AG04449 (cell line): ENCODE measurements at regions of chr7 and their contacts with region 1.

Region 1: DNA sequence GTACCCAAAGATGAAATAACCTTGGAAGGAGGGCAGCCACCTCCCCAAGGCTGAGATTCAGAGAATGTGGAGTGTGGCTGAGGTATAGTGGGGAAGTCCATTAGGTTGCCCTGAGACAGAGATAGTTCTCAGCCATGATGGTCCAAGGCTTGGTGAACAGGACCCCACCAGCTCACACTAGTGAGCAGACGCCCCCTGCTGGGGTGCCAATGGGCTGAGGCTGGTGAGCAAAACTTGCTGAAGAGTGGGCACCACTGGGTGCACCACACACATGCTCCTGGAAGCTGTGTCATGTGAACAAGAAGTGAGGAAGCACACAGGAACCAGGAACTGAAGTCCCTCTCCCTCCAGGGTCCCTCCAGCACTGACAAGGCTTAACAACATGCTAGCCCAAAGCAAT is 8.9 kb downstream of the FBXL13 start:
- DNase-seq: no peak
- H3K4me3 ChIP-seq: no peak overlapping the region
- CTCF ChIP-seq: peak; percentile 70

Region 2: DNA sequence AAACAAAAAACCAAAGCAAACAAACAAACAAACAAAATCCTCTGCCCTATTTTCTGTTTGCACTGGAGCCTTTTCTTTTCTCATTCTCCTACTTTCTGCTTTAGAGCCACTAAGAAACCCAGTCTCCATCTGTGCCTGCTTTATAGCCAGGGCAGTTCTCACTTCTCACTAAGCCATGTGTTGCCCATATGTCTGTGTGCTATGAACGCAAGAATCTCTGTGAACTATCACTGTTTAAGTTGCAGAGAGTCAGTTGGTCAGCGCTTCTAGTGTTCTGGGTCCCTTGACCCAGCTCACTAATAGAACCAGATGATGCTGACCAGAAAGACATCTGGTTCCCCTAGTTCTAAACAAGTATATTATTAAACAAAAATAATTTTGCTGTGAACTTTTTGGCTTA is 235.5 kb before region 1 on chr7:
- CTCF ChIA-PET with region 1: interaction called, 11 read pairs
- POLR2A ChIA-PET with region 1: no interaction called
- DNase-seq: no peak
- H3K4me3 ChIP-seq: no peak overlapping the region
- CTCF ChIP-seq: no peak

Region 3: DNA sequence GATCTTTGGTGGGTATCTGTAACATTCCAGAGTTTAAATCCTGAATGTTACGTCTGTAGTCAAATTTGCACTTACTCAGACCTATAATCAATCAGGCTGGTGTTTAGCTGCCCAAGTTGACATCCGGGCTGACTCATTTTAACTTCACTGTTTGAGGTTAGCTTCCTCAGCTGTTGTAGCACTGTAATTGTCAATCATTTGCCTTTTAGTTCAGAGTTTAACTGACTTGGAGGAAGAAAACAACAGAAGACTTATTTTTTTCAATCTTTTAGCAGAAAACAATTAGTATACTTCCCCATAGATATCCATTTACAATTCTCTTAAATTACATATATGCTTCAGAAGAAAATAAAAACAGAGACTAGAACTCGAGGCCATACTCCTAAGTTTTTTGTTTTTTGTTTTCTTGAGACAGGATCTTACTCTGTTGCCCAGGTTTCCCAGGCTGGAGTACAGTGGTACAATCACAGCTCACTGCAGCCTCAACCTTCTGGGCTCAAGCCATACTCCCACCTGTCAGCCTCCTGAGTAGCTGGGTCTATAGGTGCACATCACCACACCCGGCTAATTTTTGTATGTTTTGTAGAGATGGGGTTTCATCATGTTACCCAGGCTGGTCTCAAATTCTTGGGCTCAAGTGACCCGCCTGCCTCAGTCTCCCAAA is 191.4 kb before region 1 on chr7:
- CTCF ChIA-PET with region 1: interaction called, 11 read pairs
- POLR2A ChIA-PET with region 1: no interaction called
- DNase-seq: peak; percentile 71
- H3K4me3 ChIP-seq: no peak overlapping the region
- CTCF ChIP-seq: no peak

Region 4: GRCh38 chr7:103048833-103049232 is 16.8 kb before region 1 on chr7:
- CTCF ChIA-PET with region 1: interaction called, 42 read pairs
- POLR2A ChIA-PET with region 1: no interaction called
- DNase-seq: no peak
- H3K4me3 ChIP-seq: no peak overlapping the region
- CTCF ChIP-seq: no peak

Region 5: DNA sequence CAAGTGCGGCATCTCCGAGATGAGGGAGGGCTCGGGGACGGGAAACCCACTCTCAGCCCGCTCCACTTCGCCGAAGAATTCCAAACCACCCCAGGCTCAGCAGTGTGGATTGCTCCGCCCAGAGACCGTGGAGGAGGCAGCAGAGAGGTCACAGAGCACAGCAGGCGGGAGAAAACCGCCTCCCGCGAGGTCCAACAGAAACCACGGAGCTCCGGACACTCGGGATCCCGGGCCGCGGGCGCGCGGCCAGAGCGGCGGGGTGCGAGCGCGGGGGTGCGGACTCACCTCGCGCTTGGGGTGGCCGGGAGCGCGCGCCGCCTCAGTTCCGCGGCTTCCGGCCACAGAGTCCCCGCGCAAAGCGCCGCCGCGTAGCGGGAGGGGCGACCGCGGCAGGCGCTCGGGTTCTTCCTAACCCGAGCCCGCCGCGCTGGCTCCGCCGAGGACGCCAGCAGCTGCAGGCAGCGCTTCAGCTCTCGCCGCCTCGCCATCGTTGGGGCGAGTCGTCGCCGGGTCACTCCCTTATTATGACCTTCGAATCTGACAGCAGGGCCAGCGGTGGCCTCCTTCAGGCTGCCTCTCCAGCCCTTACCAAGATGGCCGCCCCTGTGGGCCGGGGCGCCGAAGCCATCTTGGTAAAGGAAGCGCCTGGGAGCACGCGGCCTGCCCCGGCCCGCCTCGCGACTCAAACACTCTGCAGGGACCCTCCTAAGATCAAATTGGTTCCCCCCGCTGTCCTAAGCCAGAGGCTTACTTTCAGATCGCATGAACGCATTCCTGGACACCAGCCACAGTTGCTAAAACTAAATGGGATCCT is 83.5 kb after region 1 on chr7 and contains the start of gene NAPEPLD:
- CTCF ChIA-PET with region 1: no interaction called
- POLR2A ChIA-PET with region 1: no interaction called
- DNase-seq: peak; percentile 29
- H3K4me3 ChIP-seq: peak within 1 kb of the TSS; percentile 77
- CTCF ChIP-seq: no peak